Left ventricle myocardium superior (tissue), 1 donor: ENCODE measurements at regions of chr6 and their contacts with region 1.

Region 1: DNA sequence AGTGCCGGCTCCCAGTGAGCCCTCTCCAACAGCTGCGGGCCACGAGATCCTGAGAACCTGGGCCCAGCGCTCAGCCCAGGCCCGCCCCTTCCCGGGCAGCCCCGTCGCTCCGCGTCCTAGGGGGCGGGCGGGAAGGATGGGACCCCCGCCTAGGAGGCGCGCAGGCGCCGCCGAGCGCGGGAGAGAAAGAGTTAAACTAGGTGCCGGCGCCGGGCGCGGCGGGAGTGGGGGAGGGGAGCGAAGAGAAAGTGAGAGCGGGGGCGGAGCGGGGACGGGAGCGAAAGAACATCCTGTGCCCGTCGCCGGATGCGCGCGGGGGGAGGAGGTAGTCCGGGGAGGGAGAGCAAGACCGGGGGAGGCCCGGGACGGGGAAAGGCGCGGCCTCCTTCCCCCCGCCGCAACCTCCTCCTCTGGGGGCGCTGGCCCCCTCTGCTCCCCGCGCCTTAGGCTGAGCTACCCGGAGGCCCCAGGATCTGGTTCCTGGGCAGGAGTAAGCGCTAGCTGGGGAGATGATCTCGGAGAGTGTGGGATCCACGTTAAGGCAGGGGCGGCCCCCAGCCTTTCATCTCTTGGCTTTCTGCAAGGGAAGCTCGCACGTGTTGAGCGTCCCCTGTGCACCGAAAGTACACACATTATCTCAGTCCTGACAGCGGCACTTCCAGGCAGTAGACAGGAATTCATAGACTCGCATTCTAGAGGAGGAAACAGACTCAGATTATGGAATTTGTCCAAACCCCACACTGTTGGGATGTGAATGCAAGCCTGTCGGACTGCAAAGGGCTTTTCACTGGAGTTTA is 4.9 kb upstream of the ARMC12 start:
- DNase-seq: peak; percentile 99
- ATAC-seq: peak; percentile 76

Region 2: DNA sequence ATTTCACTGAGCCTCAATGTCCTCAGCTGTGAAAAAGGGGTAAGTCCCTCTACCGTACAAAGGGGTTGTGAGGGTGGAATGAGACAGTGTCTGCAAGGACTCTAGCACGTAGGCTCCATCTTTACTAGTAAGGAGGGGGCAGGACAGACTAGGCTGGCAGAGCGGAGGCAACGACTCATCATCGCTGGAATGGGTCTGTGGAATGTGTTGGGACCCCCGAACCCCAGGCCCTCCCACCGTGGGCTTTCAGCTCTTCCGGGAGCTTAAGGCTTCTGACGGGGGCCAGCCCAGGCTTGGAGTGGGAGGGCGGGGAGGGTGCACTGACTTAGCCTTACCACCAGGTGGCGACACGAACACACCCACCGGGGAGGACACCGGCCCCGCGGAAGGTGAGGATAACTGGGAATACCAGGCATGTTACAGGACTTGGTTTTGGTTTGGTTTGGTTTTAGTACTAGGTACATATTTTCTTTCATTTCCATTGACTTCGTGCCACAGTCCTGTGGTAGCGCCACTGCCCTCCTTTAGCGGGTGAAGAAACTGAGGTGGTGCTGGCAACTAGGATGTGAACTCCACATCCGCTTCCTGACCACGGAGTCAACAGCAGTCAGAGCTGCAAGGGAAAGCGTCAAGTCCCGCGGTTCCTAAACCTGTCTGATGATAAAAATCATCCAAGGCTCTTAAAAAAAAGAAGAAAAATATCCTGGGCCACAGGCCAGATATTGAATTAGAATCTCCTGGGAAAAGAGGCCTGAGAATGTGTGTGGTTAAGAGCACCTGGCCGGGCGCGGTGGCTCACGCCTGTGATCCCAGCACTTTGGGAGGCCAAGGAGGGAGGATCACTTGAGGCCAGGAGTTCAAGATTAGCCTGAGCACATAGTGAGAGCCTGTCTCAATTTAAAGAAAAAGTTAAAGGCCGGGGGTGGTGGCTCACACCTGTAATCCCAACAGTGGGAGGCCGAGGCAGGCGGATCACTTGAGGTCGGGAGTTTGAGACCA is 209.0 kb before region 1 on chr6:
- intact Hi-C with region 1: loop called (anchors 2 kb)
- DNase-seq: peak; percentile 83
- ATAC-seq: peak; percentile 95

Region 3: DNA sequence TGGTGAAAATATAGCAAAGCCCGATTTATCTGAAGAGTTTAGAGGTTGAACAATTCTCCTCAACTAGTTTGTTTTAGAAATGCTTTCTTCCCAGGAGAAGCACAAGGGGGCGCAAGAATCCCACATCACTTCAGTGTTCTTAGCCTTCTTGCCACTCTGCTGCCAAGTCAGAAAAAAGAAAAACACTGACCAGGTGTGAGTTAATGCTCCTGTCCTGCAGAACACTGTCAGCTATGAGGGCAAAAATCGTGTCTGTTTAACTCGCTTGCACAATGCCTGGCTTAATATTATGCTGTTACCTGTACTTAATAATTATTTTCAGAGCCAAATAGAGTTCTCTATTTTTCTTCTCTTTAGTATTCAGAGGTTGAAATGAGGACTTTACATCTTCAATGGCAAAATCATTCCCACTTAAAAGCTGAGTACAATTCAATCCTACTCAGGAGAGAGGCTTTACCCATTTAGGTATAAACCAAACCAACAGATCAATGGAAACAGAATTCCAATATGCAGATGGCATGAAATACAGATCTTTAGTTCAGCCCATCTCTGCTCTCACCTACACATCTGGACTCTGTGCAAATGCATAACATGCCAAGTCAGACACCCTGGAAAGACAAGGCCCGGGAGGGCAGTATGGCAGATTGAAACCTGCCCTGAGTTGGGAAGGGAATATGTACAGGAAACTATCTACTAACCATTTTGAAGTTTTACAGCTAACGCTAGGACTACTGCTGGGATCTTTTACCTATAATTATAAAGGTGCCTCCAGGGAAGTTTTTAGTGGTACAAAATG is 147.8 kb before region 1 on chr6:
- intact Hi-C with region 1: loop called (anchors 2 kb)
- DNase-seq: no peak
- ATAC-seq: peak; percentile 79

Region 4: DNA sequence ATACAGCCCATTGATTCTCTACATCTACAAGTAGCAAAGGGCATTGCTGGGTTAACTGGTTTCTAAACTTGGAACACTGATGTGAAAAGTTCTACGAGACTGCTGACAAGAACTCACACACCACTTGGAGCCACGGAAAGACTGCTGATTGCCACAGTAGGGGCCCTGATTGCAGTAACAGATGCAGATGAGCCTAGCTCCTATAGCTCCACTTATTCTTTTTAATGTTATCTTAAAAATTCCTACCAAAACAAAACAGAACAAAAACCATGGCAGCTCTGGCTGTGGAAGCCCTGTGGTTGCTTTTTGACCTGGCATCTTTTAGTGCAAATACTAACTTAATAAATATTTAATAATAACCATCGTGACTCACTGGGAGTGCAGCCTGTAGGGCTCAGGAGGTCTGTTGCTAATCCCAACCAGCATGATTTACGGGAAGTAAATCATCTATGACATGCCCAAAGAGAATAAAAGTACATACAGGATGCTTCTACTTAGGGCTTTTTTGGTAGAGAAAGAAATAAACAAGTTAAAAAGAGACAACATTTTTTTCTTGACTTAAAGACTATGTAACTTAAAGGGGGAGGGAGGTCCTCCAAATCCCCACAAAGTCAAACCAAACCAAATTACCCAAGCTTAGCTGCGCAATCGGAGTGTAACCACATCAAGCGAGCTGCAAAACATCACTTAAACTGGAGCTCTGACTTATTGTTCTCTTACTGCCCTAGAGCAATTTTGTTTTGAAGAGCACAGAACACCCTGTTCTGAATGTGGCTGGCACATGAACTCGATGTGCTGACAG is 130.4 kb before region 1 on chr6:
- intact Hi-C with region 1: loop called (anchors 5 kb)
- DNase-seq: no peak
- ATAC-seq: peak; percentile 90

Region 5: GRCh38 chr6:35687658-35688580 is 44.0 kb before region 1 on chr6:
- intact Hi-C with region 1: loop called (anchors 2 kb)
- DNase-seq: peak; percentile 76
- ATAC-seq: peak; percentile 28

Region 6: DNA sequence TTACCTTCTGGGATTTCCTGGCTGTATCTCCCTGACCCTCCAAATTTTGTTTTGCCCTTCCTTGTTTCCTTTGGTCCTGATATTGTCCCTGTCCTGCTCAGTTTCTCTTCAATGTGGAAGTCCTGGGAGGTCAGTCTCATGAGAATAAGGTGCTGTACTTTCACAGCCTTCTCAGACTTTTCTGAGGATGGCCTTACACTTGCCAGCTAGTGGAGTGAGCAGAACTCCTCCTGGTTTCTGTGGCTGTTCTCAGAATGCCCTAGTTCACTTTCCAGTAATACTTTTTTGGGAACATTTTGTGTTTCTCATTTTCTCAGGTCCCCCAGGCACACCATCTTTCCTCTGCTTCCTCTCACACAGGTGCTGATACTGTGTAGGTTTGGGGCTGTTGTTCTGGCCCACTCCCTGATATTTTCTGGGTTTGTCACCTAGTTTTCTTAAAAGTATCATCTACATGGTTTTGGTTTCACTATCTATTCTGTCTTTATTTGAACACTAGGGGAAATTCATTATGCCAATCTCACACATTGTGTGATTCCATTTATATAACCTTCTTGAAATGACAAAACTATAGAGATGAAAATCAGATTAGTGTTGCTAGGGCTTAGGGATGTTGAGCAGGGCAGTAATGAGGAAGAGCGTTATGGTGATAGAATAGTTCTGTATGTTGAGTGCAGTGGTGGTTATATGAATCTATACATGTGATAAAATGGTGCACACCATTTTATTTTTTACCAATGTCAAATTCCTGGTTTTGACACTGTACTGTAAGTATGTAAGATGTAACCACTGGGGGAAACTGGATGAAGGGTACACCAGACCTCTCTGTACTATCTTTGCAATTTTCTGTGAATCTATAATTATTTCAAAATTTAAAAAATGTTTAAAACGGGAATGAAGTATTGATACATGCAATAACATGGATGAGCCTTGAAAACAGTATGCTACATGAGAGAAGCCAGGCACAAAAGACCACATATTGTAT is 437.4 kb after region 1 on chr6:
- intact Hi-C with region 1: no loop called
- DNase-seq: no peak
- ATAC-seq: no peak